Thyroid gland (tissue), 4 donors: ENCODE measurements at regions of chr21 and their contacts with region 1.

Region 1: GRCh38 chr21:38289705-38290485 is 33.1 kb downstream of the KCNJ15 start:
- DNase-seq: no peak
- H3K4me3 ChIP-seq: no peak overlapping the region
- H3K27ac ChIP-seq: peak overlapping the region; percentile 52 to 93 (median 85)
- H3K4me1 ChIP-seq: peaks cover 49 to 70% of the 10 kb centered on the region in 2 donors
- H3K27me3 ChIP-seq: no peaks in the 10 kb centered on the region
- CTCF ChIP-seq: no peak
- POLR2A ChIP-seq: no peak

Region 2: GRCh38 chr21:37619464-37619974 is 670.4 kb before region 1 on chr21:
- intact Hi-C with region 1: no loop called
- DNase-seq: no peak
- H3K4me3 ChIP-seq: no peak overlapping the region
- H3K27ac ChIP-seq: no peak overlapping the region
- H3K4me1 ChIP-seq: no peaks in the 10 kb centered on the region
- H3K27me3 ChIP-seq: no peaks in the 10 kb centered on the region
- CTCF ChIP-seq: no peak
- POLR2A ChIP-seq: no peak

Region 3: DNA sequence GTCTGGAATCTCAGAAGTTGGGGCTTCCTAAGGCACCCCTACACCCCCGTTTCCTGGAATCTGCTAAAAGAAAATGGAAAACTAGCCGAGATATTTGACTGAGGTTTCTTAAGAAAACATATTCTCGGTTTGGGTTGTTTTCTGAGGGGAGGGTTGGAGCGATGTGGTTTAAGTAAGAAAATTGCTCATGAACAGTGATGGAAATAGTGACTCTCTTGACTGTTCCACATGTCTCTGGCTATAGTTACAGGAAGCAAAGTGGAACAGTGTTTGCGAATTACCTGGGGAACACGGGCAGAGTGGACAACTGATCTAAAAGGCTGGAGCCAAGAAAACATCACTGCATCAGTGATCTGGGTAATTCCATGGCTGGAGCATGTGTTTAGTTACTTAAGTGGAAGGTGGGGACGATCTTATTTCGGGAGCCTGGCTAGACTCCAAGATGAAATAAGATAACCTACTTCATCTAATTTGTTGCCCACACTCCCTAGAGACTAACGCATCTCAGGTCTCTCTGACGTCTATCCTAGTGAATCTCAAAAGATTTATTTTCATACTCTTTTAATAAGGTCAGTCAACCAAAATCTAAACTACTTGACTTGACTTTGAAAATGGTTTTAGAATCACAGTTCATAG is 59.3 kb after region 1 on chr21:
- intact Hi-C with region 1: loop called (anchors 10 kb)
- DNase-seq: peak; percentile 80 to 83
- H3K4me3 ChIP-seq: no peak overlapping the region
- H3K27ac ChIP-seq: peak overlapping the region; percentile 93 to 97 (median 94)
- H3K4me1 ChIP-seq: peaks cover 27 to 57% of the 10 kb centered on the region in 2 donors
- H3K27me3 ChIP-seq: no peaks in the 10 kb centered on the region
- CTCF ChIP-seq: no peak
- POLR2A ChIP-seq: peak in 1 of 2 donors; percentile 43